Posterior cingulate gyrus (tissue), 11 donors: ENCODE measurements at regions of chr6 and their contacts with region 1.

Region 1: GRCh38 chr6:33271458-33272274 is at the starts of genes RPS18 and VPS52:
- DNase-seq: peak; percentile 87 to 98 (median 92)

Region 2: GRCh38 chr6:33126101-33126714 is 145.5 kb before region 1 on chr6:
- intact Hi-C with region 1: no loop called
- DNase-seq: peak in 7 of 10 donors; percentile 32 to 88 (median 64)

Region 3: DNA sequence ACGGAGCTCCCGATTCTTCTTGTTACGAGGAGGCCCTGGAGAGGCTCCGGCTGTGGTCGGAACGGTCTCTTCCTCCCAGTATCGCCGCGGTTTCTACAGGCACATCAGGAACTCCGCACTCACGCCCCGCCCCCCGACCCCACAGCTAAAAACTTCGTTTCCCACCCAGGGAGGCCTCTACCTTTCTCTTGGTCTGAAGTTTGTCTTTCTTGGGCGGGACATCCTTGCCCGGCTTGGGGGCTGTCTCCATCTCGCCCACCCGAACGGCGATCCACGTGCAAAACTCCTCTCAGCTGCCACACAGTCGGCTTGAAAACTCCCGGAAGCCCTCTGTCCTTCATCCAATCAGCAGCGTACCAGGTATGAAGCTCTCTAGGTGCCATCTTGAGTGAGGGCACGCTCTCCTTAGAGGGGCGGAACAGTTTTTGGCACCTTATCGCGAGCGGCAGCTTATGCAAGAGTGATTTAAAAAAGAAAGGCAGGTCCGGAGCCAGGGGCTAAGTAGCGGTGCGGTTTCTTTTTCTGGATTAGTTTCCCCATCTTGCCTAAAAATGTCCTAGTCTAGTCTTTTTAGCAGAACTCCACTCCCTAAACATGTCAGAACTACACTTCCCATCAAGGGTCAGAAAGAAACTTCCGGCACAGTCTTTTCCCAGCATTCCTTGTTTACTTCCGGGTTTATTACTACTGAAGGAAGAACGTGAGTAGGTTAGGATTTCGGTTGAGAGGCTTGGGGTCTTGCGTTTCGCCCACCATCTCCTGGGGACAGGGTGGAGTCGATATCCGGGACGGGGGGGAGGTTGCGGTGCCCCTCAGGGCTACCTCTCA is 17.5 kb after region 1 on chr6 and contains the starts of genes PFDN6 and WDR46:
- intact Hi-C with region 1: loop called (anchors 1 kb)
- DNase-seq: peak; percentile 62 to 97 (median 84)

Region 4: DNA sequence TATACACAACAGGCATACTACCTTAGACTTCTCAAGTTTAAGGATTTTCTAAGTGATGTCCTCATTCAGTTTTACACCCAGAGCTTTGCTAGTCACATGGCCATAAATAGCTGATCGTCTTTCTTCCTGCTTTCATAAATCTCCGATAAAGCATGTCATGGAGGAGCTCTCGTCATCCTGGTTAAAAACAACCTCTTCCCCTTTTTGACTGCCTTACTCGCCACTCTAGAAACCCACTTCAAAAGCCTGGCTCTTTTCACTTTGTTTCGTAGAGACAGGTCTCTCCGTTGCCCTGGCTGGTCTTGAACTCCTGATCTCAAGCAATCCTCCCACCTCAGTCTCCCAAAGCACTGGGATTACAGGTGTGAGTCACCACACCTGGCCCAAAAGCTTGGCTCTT is 1044.1 kb after region 1 on chr6:
- intact Hi-C with region 1: no loop called
- DNase-seq: no peak